ENCODE measurements at regions of chr3 and their contacts with region 1.

Region 1: DNA sequence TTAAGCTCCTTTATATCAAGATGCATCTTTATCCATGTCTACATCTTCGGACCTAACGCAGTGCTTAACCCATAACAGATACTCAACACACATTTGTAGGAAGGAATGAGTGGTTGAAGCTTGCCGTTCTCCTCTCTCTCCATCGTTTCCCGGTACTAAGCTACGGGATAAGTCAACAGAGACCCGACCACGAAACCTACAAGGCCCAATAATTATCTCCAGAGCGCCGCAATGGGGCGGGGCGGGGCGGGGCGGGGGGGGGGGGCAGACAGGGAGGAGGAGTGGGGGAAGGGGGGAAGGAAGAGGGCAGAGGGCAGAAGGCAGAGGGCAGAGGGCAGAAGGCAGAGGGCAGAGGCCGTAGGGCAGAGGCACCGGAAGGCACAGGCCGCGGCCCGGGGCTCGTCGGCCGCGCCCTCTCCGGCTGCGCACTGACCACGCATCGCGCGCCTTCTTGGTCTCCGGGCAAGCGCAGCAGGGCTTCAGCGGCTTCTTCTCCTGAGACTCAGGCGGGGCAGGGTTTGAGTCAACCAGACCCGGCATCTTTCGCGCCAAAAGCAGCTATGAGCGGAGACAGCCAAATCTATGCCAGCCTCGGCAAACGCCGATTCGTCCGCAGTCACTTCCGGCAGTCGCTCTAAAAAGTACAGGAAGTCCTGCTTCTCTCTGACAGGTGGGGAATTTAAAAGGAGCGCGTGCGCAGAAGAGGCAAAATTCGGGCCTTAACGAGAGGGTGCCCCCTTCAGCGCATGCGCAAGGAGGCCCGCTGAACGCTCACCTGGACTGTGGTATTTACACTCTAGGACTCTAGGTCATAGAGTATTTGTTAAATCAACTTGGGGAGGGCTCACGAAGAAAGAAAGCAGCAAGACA is at the start of gene COX17:
- DNase-seq: peak; percentile 95 to 97 (median 95)
- ATAC-seq: peak; percentile 78 to 90 (median 87)
- H3K4me3 ChIP-seq: peak within 1 kb of the TSS; percentile 38 to 82 (median 70)
- H3K27ac ChIP-seq: peak within 1 kb of the TSS; percentile 93 to 97 (median 96)
- H3K4me1 ChIP-seq: peaks cover 0 to 49% (median 32%) of the 10 kb centered on the region in 12 donors
- H3K27me3 ChIP-seq: no peaks in the 10 kb centered on the region
- CTCF ChIP-seq: no peak
- POLR2A ChIP-seq: peak in 1 of 2 donors; percentile 74
- total RNA-seq, gene COX17: 73.8 to 173 (median 112) TPM

Region 2: DNA sequence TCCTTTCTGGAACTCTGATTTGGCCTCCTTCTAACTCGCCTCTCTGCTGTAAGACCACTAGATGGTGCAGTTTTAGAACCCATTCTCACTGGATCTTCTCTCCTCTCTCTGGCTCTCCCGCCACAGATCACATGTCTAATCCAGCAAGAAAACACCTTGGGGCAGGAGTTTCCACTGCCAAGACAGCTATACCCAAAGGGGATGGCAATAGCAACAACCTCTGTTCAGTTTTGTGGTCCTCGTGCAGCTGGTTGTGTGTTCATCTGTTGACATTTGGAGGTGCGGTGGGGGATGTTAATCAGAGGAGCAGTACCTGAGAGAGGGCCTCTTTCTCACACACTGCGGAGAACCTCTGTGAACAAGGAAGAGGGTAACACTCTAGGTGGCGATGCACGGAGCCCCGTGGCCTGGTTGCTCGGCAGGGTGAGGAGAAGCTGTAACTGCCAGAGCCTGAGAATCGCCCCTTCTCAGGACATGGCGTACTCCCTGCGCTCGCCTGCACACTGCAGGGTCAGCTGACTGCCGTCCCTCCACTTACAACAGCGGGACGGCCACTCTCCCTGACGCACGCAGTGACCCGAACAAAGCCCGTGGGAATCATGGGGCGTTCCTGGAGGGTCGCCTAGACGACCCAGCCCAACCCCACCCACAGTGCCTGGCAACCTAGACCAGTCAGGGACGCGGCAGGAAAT is 531.4 kb before region 1 on chr3 and contains the start of gene TEX55:
- intact Hi-C with region 1: loop called in 1 of 10 experiments (anchors 10 kb)
- DNase-seq: peak in 3 of 5 donors; percentile 22 to 37 (median 29)
- ATAC-seq: peak; percentile 59 to 75 (median 66)
- H3K4me3 ChIP-seq: peak within 1 kb of the TSS in 1 of 12 donors; percentile 20
- H3K27ac ChIP-seq: peak within 1 kb of the TSS in 1 of 12 donors; percentile 54
- H3K4me1 ChIP-seq: no peaks in the 10 kb centered on the region
- H3K27me3 ChIP-seq: no peaks in the 10 kb centered on the region
- CTCF ChIP-seq: peak in 11 of 12 donors; percentile 24 to 60 (median 36)
- POLR2A ChIP-seq: no peak
- total RNA-seq, gene TEX55: not detected

Region 3: GRCh38 chr3:119420196-119420595 is 256.8 kb before region 1 on chr3:
- intact Hi-C with region 1: loop called in 1 of 10 experiments (anchors 10 kb)
- DNase-seq: no peak
- ATAC-seq: no peak
- H3K4me3 ChIP-seq: no peak overlapping the region
- H3K27ac ChIP-seq: peak overlapping the region in 1 of 12 donors; percentile 85
- H3K4me1 ChIP-seq: peaks cover 0 to 31% (median 9%) of the 10 kb centered on the region in 12 donors
- H3K27me3 ChIP-seq: no peaks in the 10 kb centered on the region
- CTCF ChIP-seq: no peak
- POLR2A ChIP-seq: no peak

Region 4: GRCh38 chr3:119469381-119470189 is 207.4 kb before region 1 on chr3:
- intact Hi-C with region 1: loop called in 3 of 10 experiments (anchors 5 to 10 kb)
- DNase-seq: peak in 1 of 5 donors; percentile 49
- ATAC-seq: peak in 1 of 4 donors; percentile 13
- H3K4me3 ChIP-seq: peak overlapping the region; percentile 53 to 96 (median 84)
- H3K27ac ChIP-seq: peak overlapping the region in 11 of 12 donors; percentile 66 to 97 (median 84)
- H3K4me1 ChIP-seq: peaks cover 0 to 19% (median 10%) of the 10 kb centered on the region in 12 donors
- H3K27me3 ChIP-seq: no peaks in the 10 kb centered on the region
- CTCF ChIP-seq: no peak
- POLR2A ChIP-seq: no peak

Region 5: GRCh38 chr3:119524931-119525662 is 151.9 kb before region 1 on chr3:
- intact Hi-C with region 1: loop called (anchors 2 to 10 kb)
- DNase-seq: no peak
- ATAC-seq: peak in 3 of 4 donors; percentile 37 to 47 (median 45)
- H3K4me3 ChIP-seq: no peak overlapping the region
- H3K27ac ChIP-seq: peak overlapping the region in 7 of 12 donors; percentile 2 to 50 (median 6)
- H3K4me1 ChIP-seq: peaks cover 0 to 15% (median 0%) of the 10 kb centered on the region in 12 donors
- H3K27me3 ChIP-seq: no peaks in the 10 kb centered on the region
- CTCF ChIP-seq: peak in 11 of 12 donors; percentile 23 to 69 (median 50)
- POLR2A ChIP-seq: no peak

Region 6: DNA sequence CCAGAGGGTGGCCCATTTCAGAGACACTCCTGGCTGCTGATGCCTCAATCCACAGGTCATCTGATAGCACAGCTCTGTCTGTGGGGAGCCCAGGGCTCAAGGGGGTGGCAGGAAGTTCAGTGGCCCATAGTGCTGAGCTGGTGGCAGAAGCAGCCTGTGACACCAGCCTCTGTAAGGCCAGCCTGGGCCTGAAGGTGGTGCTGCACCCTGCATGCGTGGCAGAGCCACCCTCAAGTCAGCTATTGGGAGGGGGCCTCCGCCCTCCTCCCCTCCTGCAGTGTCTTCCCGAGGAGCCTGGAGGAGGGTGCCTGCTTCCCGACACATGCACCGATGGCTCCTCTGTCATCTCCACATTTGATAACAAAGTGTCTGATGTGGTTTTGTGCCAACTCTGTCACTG is 76.3 kb before region 1 on chr3:
- intact Hi-C with region 1: loop called in 4 of 10 experiments (anchors 2 to 5 kb)
- DNase-seq: peak; percentile 35 to 66 (median 53)
- ATAC-seq: peak; percentile 72 to 84 (median 82)
- H3K4me3 ChIP-seq: no peak overlapping the region
- H3K27ac ChIP-seq: peak overlapping the region in 9 of 12 donors; percentile 15 to 85 (median 54)
- H3K4me1 ChIP-seq: peaks cover 3 to 80% (median 55%) of the 10 kb centered on the region in 12 donors
- H3K27me3 ChIP-seq: no peaks in the 10 kb centered on the region
- CTCF ChIP-seq: peak; percentile 36 to 69 (median 56)
- POLR2A ChIP-seq: no peak

Region 7: GRCh38 chr3:119759962-119760361 is 83.0 kb after region 1 on chr3:
- intact Hi-C with region 1: no loop called
- DNase-seq: no peak
- ATAC-seq: no peak
- H3K4me3 ChIP-seq: no peak overlapping the region
- H3K27ac ChIP-seq: no peak overlapping the region
- H3K4me1 ChIP-seq: no peaks in the 10 kb centered on the region
- H3K27me3 ChIP-seq: no peaks in the 10 kb centered on the region
- CTCF ChIP-seq: no peak
- POLR2A ChIP-seq: no peak

Measured in heart left ventricle (tissue), 16 donors.